ENCODE measurements at regions of chr15 and their contacts with region 1.

Region 1: DNA sequence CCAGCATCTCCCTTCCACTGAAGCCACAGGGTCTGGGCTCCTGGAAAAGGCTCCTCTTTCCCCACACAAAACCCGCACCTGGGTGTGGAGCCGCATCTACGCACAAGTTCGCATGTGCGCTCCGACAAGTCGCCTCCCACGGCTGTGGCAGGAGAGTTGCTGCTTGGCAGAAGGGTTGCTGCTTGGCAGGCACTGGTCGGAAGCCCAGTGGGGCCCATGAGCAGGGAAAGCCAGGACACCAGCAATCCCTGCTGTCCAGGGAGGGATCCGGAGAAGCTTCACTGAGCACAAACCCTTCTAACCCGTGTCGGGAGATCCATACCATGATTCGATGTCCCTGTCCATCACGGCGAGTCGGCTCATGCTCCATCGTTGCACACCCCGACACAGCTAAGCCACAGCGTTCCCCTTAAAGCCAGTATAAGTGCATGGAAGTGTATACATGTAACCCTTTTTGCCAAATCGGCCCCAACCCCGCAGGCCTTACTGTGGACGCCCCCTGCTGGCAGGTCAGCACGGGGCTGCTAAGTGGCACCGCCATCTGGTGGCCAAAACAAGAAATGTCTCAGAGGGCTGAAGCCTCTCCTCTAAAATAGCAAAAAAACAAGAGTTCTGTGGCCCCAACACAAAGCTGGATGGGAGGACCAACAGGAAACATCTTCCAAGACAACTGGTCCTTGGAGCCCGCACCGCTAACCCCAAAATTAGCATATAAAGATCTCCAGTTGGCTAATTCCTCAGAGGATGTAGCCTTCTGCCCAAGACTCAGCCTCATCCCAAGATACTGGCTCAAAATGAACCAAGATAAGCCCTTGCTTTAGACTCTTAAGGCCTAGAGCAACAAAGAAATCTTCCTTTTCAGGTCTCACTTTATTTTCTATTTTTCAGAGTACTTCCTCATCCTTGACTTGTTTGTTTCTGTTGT is 8.3 kb downstream of the ANKRD63 start:
- DNase-seq: peak; percentile 58
- H3K4me3 ChIP-seq: no peak overlapping the region
- H3K27ac ChIP-seq: no peak overlapping the region
- H3K27me3 ChIP-seq: peaks cover 32% of the 10 kb centered on the region
- CTCF ChIP-seq: peak; percentile 100

Region 2: DNA sequence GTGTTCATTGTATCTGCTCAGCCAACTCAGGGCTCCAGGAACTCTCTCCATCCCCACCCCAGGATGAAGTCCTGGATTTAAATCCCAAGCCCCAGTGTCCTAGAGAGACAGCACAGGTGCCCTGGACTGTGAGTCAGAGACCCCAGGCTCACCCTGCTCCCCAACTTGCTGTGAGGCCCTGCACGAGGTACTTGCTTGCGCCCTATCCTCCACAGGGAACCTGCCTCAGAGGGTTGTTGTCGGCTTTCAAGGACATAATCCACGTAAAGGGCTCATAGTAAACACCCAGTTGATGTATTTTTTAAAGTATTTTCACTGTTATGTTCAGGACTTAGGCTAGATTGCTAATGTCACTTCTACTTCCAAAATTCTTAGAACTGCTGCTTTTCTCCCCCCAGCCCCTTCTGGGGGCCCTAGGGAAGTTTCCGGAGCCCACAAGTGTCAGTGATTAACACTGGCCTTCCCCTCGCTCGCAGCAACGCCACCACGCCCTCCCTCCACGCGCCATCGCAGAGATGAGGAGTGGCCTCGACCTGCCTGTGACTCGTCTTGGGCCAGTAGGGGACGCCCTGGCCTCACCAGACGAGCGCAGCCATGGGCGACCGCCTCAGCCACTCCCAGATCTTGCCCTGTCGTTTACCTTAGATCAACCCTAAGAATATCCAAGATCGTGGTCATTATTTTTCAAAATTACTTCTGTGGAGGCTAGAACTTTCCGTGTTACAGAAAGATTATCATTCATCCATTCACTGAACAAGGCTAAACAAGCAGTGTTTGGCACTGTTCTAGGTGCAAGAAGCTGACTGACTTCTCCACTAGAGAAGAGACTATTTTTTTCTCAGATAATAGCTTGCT is 229.7 kb before region 1 on chr15:
- CTCF ChIA-PET with region 1: interaction called, 100 read pairs
- POLR2A ChIA-PET with region 1: no interaction called
- DNase-seq: no peak
- H3K4me3 ChIP-seq: peak overlapping the region; percentile 31
- H3K27ac ChIP-seq: no peak overlapping the region
- H3K27me3 ChIP-seq: no peaks in the 10 kb centered on the region
- CTCF ChIP-seq: peak; percentile 93

Region 3: GRCh38 chr15:40151991-40152390 is 122.6 kb before region 1 on chr15:
- CTCF ChIA-PET with region 1: no interaction called
- POLR2A ChIA-PET with region 1: no interaction called
- DNase-seq: no peak
- H3K4me3 ChIP-seq: no peak overlapping the region
- H3K27ac ChIP-seq: peak overlapping the region; percentile 11
- H3K27me3 ChIP-seq: peaks cover 4% of the 10 kb centered on the region
- CTCF ChIP-seq: no peak

Region 4: DNA sequence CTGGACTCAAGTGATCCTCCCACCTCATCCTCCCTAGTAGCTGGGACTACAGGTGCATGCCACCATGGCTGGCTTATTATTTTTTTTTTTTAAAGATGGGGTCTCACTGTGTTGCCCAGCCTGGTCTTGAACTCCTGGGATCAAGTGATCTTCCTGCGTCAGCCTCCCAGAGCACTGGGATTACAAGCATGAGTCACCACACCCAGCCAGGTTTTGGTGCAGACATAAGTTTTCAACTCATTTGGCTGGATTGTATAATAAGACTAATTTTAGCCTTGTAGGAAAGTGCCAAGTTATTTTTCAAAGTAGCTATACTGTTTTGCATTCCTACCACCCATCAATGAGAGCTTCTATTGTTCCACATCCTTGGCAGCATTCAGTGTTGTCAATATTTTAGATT is 81.7 kb before region 1 on chr15:
- CTCF ChIA-PET with region 1: interaction called, 68 read pairs
- POLR2A ChIA-PET with region 1: no interaction called
- DNase-seq: no peak
- H3K4me3 ChIP-seq: no peak overlapping the region
- H3K27ac ChIP-seq: no peak overlapping the region
- H3K27me3 ChIP-seq: no peaks in the 10 kb centered on the region
- CTCF ChIP-seq: no peak

Region 5: GRCh38 chr15:40238532-40239403 is 35.8 kb before region 1 on chr15 and contains the start of gene PAK6:
- CTCF ChIA-PET with region 1: interaction called, 17 read pairs
- POLR2A ChIA-PET with region 1: no interaction called
- DNase-seq: no peak
- H3K4me3 ChIP-seq: peak within 1 kb of the TSS; percentile 53
- H3K27ac ChIP-seq: no peak within 1 kb of the TSS
- H3K27me3 ChIP-seq: peaks cover 9% of the 10 kb centered on the region
- CTCF ChIP-seq: no peak
- polyA plus RNA-seq, gene PAK6: not detected in 2 replicates

Region 6: DNA sequence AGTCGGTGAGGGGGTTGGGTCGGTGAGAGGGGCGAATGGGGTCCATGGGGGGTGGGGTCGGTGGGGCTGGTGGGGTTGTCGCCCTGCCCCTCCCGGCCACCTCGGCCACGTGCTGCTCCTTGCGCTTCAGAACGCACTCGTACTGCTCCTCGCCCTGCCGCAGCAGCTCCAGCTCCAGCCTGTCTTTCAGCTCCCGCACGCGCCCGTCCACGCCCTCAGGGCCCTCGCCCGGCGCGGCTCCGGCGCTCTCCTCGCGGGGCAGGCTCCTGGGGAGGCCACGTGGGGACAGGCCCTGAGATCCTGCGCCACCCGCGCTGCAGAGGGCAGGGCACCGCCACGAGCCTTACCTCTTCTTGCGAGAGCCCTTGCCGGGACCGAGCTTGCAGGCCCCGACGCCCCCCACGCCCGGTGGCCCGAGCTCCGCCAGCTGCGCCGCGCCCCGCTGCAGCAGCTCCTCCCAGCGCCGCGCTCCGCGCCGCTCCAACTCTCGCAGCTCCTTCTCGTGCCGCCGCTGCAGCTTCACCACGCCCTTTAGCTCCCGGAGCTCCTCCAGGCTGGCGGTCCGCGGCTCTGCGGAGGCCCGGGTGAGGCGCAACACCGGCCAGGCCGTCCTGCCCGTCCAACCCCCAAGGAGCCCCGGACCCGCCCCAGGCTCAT is 16.4 kb after region 1 on chr15:
- CTCF ChIA-PET with region 1: interaction called, 56 read pairs
- POLR2A ChIA-PET with region 1: interaction called, 5 read pairs
- DNase-seq: peak; percentile 15
- H3K4me3 ChIP-seq: peak overlapping the region; percentile 51
- H3K27ac ChIP-seq: no peak overlapping the region
- H3K27me3 ChIP-seq: peaks cover 57% of the 10 kb centered on the region
- CTCF ChIP-seq: no peak

Region 7: DNA sequence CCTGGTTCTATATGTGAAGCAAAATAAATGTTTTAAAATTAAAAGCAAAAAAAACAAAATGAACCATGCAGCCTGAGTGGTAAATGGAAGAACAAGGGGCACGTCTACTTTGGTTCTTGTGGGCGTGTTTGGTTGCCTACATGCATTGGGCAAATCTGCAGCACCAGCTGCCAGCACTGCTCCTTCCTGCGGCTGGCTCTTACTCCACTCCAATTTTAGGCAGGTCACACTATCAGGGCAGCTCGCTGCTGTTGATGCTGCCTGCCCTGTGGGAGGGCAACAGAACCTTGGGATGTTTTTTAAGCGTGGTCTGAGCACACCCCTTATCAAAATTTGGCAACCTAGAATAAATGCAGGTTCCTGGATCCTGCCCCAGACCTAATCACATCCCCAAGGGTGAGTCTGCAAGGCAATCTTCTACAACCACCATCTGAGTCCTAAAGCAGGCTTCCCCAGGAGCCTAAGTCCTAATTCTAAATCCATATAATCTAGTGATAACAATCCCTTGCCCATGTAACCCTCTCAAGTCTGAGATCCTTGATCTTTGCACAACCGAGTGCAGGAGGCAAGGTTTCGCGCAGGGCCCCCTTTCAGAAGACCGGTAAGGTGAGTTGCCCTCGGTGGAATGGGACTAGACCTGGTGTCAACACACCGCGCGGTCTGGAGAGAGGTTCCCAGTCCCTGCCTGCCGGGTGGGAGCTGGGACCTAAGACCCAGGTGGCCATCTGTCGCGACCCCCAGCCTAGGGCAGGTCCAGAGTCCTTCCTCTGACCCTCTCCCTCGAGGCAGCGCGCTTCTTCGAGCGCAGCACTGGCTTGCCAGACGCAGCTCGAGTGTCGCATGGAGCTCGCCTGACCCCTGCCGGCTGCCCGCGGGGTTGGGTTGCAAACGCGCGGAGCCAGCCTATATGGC is 146.9 kb after region 1 on chr15:
- CTCF ChIA-PET with region 1: interaction called, 41 read pairs
- POLR2A ChIA-PET with region 1: interaction called, 3 read pairs
- DNase-seq: no peak
- H3K4me3 ChIP-seq: peak overlapping the region; percentile 34; the same call in 1 of the 2 replicates
- H3K27ac ChIP-seq: no peak overlapping the region
- H3K27me3 ChIP-seq: peaks cover 2% of the 10 kb centered on the region
- CTCF ChIP-seq: peak; percentile 97

Measured in AG04450 (cell line).